ENCODE measurements at regions of chr2 and their contacts with region 1.

Region 1: DNA sequence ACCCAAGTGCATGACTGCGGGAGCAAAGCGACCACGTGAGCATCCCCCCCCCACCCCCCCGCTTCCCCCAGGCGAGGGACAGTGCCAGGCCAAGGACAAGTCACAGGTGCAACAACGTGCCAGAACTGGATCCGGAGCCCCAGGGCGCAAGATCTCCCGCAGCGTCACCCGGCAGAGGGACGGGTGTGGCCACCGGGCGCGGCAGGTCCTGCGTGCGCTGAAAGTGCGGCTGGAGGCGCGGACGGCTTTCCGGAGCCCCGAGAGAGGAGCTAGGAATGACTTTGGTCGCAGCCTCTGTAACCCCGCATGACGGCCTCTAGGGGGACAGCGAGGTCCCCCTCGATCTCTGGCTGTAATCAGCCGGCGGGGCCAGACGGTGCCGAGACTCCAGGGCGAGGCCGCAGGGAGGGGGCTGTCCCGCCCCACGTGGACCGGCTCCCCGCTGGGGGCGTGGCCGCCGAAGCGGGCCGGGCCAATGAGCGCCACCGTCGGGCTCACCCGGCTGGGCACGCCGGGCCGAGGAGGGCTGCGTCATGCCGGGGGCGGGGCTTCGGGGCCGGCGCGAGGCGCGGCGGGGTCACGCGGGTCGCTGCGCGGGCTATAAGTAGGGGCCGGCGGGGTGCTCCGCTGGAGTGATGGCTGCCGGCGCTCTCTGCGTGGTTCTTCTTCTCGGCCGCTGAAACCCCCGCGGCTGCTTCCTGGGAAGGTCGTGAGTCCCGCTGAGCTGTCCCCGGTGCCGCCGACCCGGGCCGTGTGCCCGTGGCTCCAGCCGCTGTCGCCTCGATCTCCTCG is at the start of gene SLC20A1:
- DNase-seq: peak; percentile 99
- ATAC-seq: peak; percentile 89
- H3K4me3 Mint-ChIP-seq: peak within 1 kb of the TSS; percentile 95
- H3K27ac Mint-ChIP-seq: peak within 1 kb of the TSS; percentile 79
- H3K4me1 Mint-ChIP-seq: peaks cover 58% of the 10 kb centered on the region
- H3K27me3 Mint-ChIP-seq: no peaks in the 10 kb centered on the region
- total RNA-seq, gene SLC20A1: 69.3 to 69.6 TPM

Region 2: GRCh38 chr2:112187805-112188596 is 457.5 kb before region 1 on chr2:
- CTCF ChIA-PET with region 1: no interaction called
- POLR2A ChIA-PET with region 1: no interaction called
- intact Hi-C with region 1: loop called in 1 of 2 experiments (anchors 5 kb)
- DNase-seq: peak; percentile 90
- ATAC-seq: peak; percentile 86
- H3K4me3 Mint-ChIP-seq: peak overlapping the region; percentile 62
- H3K27ac Mint-ChIP-seq: peak overlapping the region; percentile 96
- H3K4me1 Mint-ChIP-seq: peaks cover 90% of the 10 kb centered on the region
- H3K27me3 Mint-ChIP-seq: no peaks in the 10 kb centered on the region

Region 3: DNA sequence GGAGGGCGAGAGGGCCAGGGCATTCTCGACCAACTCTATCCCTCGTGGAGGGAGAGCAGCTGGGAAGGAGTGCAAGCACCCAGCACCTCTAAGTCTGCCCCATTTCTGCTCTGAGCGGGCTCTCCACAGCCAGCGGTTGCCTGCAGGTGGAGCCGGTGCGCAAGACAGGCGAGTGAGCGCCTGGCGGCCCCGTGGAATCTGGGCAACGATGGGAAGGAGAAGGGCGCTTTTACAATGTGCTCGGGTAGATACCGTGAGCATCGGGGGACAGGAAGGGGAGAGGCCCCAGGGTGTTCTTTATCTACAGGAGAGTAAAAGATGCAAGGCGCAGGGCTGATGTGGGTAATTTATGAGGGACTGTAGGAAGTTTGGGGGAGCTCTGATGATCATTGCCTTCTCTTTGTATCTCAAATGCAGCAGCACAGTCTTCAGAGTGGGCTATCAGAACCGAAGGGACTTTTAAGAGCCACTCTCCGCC is 164.4 kb before region 1 on chr2:
- CTCF ChIA-PET with region 1: no interaction called
- POLR2A ChIA-PET with region 1: no interaction called
- intact Hi-C with region 1: loop called in 1 of 2 experiments (anchors 1 kb)
- DNase-seq: peak; percentile 93
- ATAC-seq: peak; percentile 88
- H3K4me3 Mint-ChIP-seq: peak overlapping the region; percentile 81
- H3K27ac Mint-ChIP-seq: peak overlapping the region; percentile 85
- H3K4me1 Mint-ChIP-seq: peaks cover 32% of the 10 kb centered on the region
- H3K27me3 Mint-ChIP-seq: no peaks in the 10 kb centered on the region

Region 4: GRCh38 chr2:112606488-112606902 is 39.0 kb before region 1 on chr2:
- CTCF ChIA-PET with region 1: interaction called, 7 read pairs
- POLR2A ChIA-PET with region 1: no interaction called
- intact Hi-C with region 1: loop called in 1 of 2 experiments (anchors 2 kb)
- DNase-seq: no peak
- ATAC-seq: no peak
- H3K4me3 Mint-ChIP-seq: no peak overlapping the region
- H3K27ac Mint-ChIP-seq: no peak overlapping the region
- H3K4me1 Mint-ChIP-seq: no peaks in the 10 kb centered on the region
- H3K27me3 Mint-ChIP-seq: no peaks in the 10 kb centered on the region

Region 5: DNA sequence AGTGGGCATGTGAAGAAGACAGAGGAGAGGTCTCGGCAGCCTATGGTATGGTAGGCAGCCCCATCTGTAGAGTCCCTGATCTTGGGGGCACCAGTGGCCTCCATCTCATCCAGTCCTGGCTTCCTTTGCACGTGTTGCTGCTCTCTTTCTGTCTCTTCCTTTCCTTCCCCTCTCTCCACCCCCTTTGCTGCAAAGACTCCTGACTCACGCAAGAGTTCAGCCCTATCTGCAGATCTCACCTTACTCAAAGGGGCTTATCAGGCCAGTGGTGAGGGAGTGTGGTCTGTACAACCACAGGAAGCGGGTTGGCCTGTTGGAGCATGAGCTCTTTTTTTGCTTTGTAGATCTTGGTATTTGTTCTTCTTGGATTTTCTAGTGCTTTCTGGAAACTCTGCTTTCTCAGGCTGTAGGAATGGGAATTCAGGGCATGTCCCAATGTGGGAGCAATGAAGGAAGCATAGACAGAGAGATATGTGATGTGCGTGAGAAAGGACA is 60.7 kb after region 1 on chr2:
- CTCF ChIA-PET with region 1: no interaction called
- POLR2A ChIA-PET with region 1: interaction called, 3 read pairs
- intact Hi-C with region 1: loop called in 1 of 2 experiments (anchors 1 kb)
- DNase-seq: peak; percentile 78
- ATAC-seq: peak; percentile 93
- H3K4me3 Mint-ChIP-seq: no peak overlapping the region
- H3K27ac Mint-ChIP-seq: no peak overlapping the region
- H3K4me1 Mint-ChIP-seq: peaks cover 31% of the 10 kb centered on the region
- H3K27me3 Mint-ChIP-seq: peaks cover 11% of the 10 kb centered on the region

Region 6: DNA sequence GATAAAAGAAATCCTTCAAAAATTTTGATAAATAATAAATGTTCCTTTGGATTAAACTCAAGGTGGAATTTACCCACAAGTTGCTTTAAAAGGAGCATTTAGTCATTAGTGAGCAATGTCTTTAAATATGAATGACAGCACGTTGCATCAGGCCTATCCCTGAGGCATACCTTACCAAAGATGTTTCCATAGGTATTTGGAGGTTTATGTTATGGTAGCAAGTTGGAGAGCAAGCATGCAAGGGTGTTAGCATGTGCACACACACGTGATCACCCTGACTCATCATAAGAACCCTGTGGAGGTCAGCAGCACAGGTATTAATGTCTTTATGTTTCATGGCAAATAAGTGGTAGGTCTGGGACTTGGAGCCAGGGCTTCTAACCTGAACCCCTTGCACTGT is 1404.3 kb after region 1 on chr2:
- CTCF ChIA-PET with region 1: no interaction called
- POLR2A ChIA-PET with region 1: no interaction called
- intact Hi-C with region 1: no loop called
- DNase-seq: no peak
- ATAC-seq: no peak
- H3K4me3 Mint-ChIP-seq: no peak overlapping the region
- H3K27ac Mint-ChIP-seq: no peak overlapping the region
- H3K4me1 Mint-ChIP-seq: no peaks in the 10 kb centered on the region
- H3K27me3 Mint-ChIP-seq: peaks cover 14% of the 10 kb centered on the region